CD4-positive, alpha-beta T cell (primary cell): ENCODE measurements at regions of chr20 and their contacts with region 1.

Region 1: GRCh38 chr20:44310664-44311639 is at the start of gene FITM2:
- DNase-seq: peak; percentile 96 to 99 (median 98)
- ATAC-seq: peak; percentile 94
- H3K4me3 ChIP-seq: peak within 1 kb of the TSS; percentile 99
- H3K4me3 Mint-ChIP-seq: peak within 1 kb of the TSS; percentile 95
- H3K27ac ChIP-seq: peak within 1 kb of the TSS; percentile 40 to 47
- H3K27ac Mint-ChIP-seq: peak within 1 kb of the TSS; percentile 76
- H3K4me1 ChIP-seq: peaks cover 28% of the 10 kb centered on the region
- H3K4me1 Mint-ChIP-seq: peaks cover 28% of the 10 kb centered on the region
- H3K27me3 ChIP-seq: no peaks in the 10 kb centered on the region
- H3K27me3 Mint-ChIP-seq: no peaks in the 10 kb centered on the region
- CTCF ChIP-seq: peak; percentile 87
- total RNA-seq, gene FITM2: 3.2 to 3.4 TPM

Region 2: DNA sequence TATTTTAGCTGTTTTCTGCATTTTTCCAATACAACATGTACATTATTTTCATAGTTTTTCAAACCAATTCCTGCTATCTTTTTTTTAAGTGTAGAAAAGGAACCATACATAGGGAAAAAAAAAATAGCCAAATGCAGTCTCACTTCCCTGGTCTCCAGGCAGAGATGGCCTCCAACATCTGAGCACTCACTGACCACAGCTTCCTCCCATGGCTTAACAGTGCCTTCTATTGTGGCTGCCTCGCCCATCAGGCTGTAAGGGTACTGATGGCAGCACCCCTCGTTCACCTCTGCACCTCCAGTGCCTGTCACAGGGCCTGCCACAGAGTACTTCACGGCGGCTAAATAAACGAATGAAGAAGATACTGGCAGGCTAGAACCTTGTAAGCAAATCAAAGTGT is 1712.4 kb before region 1 on chr20:
- CTCF ChIA-PET with region 1: no interaction called
- POLR2A ChIA-PET with region 1: no interaction called
- intact Hi-C with region 1: no loop called
- DNase-seq: no peak
- ATAC-seq: no peak
- H3K4me3 ChIP-seq: no peak overlapping the region
- H3K4me3 Mint-ChIP-seq: no peak overlapping the region
- H3K27ac ChIP-seq: no peak overlapping the region
- H3K27ac Mint-ChIP-seq: no peak overlapping the region
- H3K4me1 ChIP-seq: no peaks in the 10 kb centered on the region
- H3K4me1 Mint-ChIP-seq: no peaks in the 10 kb centered on the region
- H3K27me3 ChIP-seq: no peaks in the 10 kb centered on the region
- H3K27me3 Mint-ChIP-seq: no peaks in the 10 kb centered on the region
- CTCF ChIP-seq: no peak

Region 3: GRCh38 chr20:43318755-43319297 is 992.1 kb before region 1 on chr20:
- CTCF ChIA-PET with region 1: no interaction called
- POLR2A ChIA-PET with region 1: no interaction called
- intact Hi-C with region 1: no loop called
- DNase-seq: no peak
- ATAC-seq: no peak
- H3K4me3 ChIP-seq: no peak overlapping the region
- H3K4me3 Mint-ChIP-seq: no peak overlapping the region
- H3K27ac ChIP-seq: no peak overlapping the region
- H3K27ac Mint-ChIP-seq: no peak overlapping the region
- H3K4me1 ChIP-seq: no peaks in the 10 kb centered on the region
- H3K4me1 Mint-ChIP-seq: no peaks in the 10 kb centered on the region
- H3K27me3 ChIP-seq: peaks cover 0 to 3% of the 10 kb centered on the region in 2 experiments
- H3K27me3 Mint-ChIP-seq: peaks cover 8% of the 10 kb centered on the region
- CTCF ChIP-seq: no peak

Region 4: DNA sequence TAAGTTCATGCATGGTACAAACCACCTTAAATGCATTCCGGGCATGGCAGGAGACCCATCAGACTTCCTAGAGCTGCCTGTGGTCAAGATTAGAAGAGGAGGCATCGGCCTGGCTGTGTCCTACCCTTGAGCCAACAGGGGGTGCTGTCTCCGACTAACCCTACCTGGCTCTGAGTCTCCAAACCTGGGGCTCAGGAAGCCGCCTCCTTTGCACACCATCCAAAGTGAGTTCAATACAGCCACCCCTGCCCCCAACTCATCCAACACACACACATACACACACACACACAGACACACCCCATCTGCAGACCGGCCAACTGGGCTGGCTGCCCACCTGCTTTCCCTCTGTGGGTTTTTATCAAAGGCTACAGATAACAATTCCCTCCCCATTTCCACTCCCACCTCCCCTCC is 201.0 kb before region 1 on chr20:
- CTCF ChIA-PET with region 1: no interaction called
- POLR2A ChIA-PET with region 1: no interaction called
- intact Hi-C with region 1: loop called in 1 of 2 experiments (anchors 10 kb)
- DNase-seq: no peak
- ATAC-seq: no peak
- H3K4me3 ChIP-seq: no peak overlapping the region
- H3K4me3 Mint-ChIP-seq: no peak overlapping the region
- H3K27ac ChIP-seq: no peak overlapping the region
- H3K27ac Mint-ChIP-seq: no peak overlapping the region
- H3K4me1 ChIP-seq: no peaks in the 10 kb centered on the region
- H3K4me1 Mint-ChIP-seq: peaks cover 3% of the 10 kb centered on the region
- H3K27me3 ChIP-seq: peaks cover 18 to 19% of the 10 kb centered on the region in 2 experiments
- H3K27me3 Mint-ChIP-seq: peaks cover 71% of the 10 kb centered on the region
- CTCF ChIP-seq: no peak

Region 5: DNA sequence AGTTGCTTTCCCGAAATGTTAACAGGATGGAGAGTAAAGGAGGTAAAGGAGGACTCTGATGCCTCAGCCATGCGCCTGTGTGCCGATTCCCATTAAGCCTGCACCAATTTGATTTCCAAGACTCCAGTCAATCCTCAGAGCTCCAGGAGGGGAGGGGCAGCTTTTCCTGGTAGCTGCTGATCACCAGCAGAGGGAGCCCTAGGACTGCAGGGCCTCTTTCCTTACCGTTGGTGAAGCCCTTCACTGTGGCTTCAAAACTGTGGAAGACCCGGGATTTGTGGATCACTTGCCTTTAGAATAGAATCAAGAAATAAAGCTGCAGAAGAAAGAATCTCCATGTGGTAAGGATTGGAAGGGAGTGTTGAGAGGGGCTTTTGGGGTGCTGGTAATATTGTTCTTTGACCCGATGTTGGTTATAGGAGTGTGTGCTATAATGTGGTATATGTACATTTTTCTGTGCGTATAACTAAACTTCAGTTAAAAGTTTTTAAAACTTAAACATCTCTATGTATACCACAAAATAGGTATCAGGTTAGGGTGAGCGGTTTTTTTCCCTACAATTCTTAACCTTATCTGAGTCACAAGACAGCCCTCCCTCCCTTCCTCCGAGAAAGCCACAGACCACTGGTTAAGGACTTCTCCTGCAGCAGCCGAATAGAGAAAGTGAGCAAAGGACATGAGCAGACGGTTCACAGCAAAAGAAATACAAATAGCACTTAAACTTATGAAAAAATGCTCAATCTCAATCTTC is 93.4 kb before region 1 on chr20:
- CTCF ChIA-PET with region 1: interaction called, 241 read pairs
- POLR2A ChIA-PET with region 1: interaction called, 155 read pairs
- intact Hi-C with region 1: loop called (anchors 1 kb)
- DNase-seq: peak; percentile 51 to 87 (median 63)
- ATAC-seq: peak; percentile 49
- H3K4me3 ChIP-seq: peak overlapping the region; percentile 41
- H3K4me3 Mint-ChIP-seq: peak overlapping the region; percentile 80
- H3K27ac ChIP-seq: peak overlapping the region; percentile 62 to 71
- H3K27ac Mint-ChIP-seq: peak overlapping the region; percentile 91
- H3K4me1 ChIP-seq: peaks cover 46% of the 10 kb centered on the region
- H3K4me1 Mint-ChIP-seq: peaks cover 60% of the 10 kb centered on the region
- H3K27me3 ChIP-seq: no peaks in the 10 kb centered on the region
- H3K27me3 Mint-ChIP-seq: no peaks in the 10 kb centered on the region
- CTCF ChIP-seq: peak; percentile 98

Region 6: GRCh38 chr20:44342248-44342647 is 31.3 kb after region 1 on chr20:
- CTCF ChIA-PET with region 1: no interaction called
- POLR2A ChIA-PET with region 1: no interaction called
- intact Hi-C with region 1: no loop called
- DNase-seq: no peak
- ATAC-seq: no peak
- H3K4me3 ChIP-seq: no peak overlapping the region
- H3K4me3 Mint-ChIP-seq: no peak overlapping the region
- H3K27ac ChIP-seq: no peak overlapping the region
- H3K27ac Mint-ChIP-seq: no peak overlapping the region
- H3K4me1 ChIP-seq: no peaks in the 10 kb centered on the region
- H3K4me1 Mint-ChIP-seq: no peaks in the 10 kb centered on the region
- H3K27me3 ChIP-seq: no peaks in the 10 kb centered on the region
- H3K27me3 Mint-ChIP-seq: peaks cover 4% of the 10 kb centered on the region
- CTCF ChIP-seq: no peak

Region 7: GRCh38 chr20:44388466-44389023 is 77.6 kb after region 1 on chr20:
- CTCF ChIA-PET with region 1: interaction called, 3 read pairs
- POLR2A ChIA-PET with region 1: no interaction called
- intact Hi-C with region 1: loop called (anchors 5 kb)
- DNase-seq: peak; percentile 39 to 85 (median 56)
- ATAC-seq: peak; percentile 92
- H3K4me3 ChIP-seq: no peak overlapping the region
- H3K4me3 Mint-ChIP-seq: no peak overlapping the region
- H3K27ac ChIP-seq: no peak overlapping the region
- H3K27ac Mint-ChIP-seq: no peak overlapping the region
- H3K4me1 ChIP-seq: peaks cover 8% of the 10 kb centered on the region
- H3K4me1 Mint-ChIP-seq: peaks cover 15% of the 10 kb centered on the region
- H3K27me3 ChIP-seq: peaks cover 4% of the 10 kb centered on the region in 2 experiments
- H3K27me3 Mint-ChIP-seq: peaks cover 8% of the 10 kb centered on the region
- CTCF ChIP-seq: peak; percentile 66

Region 8: DNA sequence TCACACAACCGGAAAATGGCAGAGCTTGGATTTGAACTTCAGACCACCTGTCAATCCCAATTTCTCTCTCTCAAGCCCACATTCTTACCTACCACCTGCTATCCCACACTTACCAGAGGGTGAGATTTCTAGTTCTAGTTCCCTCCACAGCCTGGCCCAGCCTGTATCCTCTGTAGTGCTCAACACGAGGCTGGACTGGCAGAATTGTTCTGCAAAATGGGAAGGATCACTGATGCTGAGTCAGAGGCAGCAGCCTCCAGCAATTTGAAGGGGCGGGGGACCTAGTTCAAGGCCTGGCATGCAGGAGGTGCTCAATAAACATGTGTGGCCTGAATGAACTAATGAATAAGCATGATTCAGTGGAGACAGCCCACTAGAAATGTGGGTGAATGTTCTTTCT is 111.1 kb after region 1 on chr20:
- CTCF ChIA-PET with region 1: no interaction called
- POLR2A ChIA-PET with region 1: no interaction called
- intact Hi-C with region 1: no loop called
- DNase-seq: no peak
- ATAC-seq: no peak
- H3K4me3 ChIP-seq: no peak overlapping the region
- H3K4me3 Mint-ChIP-seq: no peak overlapping the region
- H3K27ac ChIP-seq: no peak overlapping the region
- H3K27ac Mint-ChIP-seq: no peak overlapping the region
- H3K4me1 ChIP-seq: no peaks in the 10 kb centered on the region
- H3K4me1 Mint-ChIP-seq: no peaks in the 10 kb centered on the region
- H3K27me3 ChIP-seq: peaks cover 0 to 5% of the 10 kb centered on the region in 2 experiments
- H3K27me3 Mint-ChIP-seq: peaks cover 17% of the 10 kb centered on the region
- CTCF ChIP-seq: no peak

Region 9: GRCh38 chr20:44475694-44476560 is 165.0 kb after region 1 on chr20 and contains the start of gene TTPAL:
- CTCF ChIA-PET with region 1: no interaction called
- POLR2A ChIA-PET with region 1: no interaction called
- intact Hi-C with region 1: loop called in 1 of 2 experiments (anchors 5 kb)
- DNase-seq: peak; percentile 75 to 95 (median 86)
- ATAC-seq: peak; percentile 95
- H3K4me3 ChIP-seq: peak within 1 kb of the TSS; percentile 90
- H3K4me3 Mint-ChIP-seq: peak within 1 kb of the TSS; percentile 95
- H3K27ac ChIP-seq: peak within 1 kb of the TSS; percentile 89 to 98
- H3K27ac Mint-ChIP-seq: peak within 1 kb of the TSS; percentile 96
- H3K4me1 ChIP-seq: peaks cover 18% of the 10 kb centered on the region
- H3K4me1 Mint-ChIP-seq: peaks cover 26% of the 10 kb centered on the region
- H3K27me3 ChIP-seq: no peaks in the 10 kb centered on the region
- H3K27me3 Mint-ChIP-seq: no peaks in the 10 kb centered on the region
- CTCF ChIP-seq: no peak
- total RNA-seq, gene TTPAL: 9.0 to 9.9 TPM

Region 10: DNA sequence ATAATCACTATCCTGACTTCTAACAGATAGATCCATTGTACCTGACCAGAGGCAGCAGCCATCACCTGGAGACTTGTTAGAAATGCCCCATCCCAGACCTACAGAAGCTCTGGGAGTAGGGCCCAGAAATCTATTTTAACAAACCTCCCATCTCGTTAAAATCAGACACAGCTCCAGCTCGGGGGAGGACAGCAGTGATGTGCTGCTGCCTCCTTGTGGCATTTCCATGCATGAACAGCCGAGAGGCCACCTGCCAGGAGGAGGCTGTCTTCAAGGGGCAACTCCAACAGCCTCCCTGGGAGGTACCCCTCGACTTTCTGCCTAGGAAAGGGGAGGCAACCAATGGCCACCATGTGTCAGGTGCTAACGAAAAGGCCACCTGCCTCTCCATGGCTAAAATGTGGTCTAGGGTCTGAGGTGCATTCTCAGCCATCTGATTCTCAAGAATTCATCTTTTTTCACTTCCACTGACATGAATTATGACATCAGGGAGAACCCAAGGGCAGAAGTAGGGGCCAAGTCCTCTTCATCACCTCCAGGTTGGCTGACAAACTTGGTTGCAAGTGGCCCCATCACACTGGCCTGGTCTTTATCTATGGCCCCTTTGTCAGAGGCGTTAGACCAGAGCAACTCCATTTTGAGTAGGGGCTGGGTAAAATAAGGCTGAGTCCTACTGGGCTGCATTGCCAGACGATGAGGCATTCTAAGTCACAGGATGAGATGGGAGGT is 422.6 kb after region 1 on chr20:
- CTCF ChIA-PET with region 1: no interaction called
- POLR2A ChIA-PET with region 1: no interaction called
- intact Hi-C with region 1: loop called in 1 of 2 experiments (anchors 10 kb)
- DNase-seq: peak; percentile 38 to 81 (median 50)
- ATAC-seq: peak; percentile 74
- H3K4me3 ChIP-seq: no peak overlapping the region
- H3K4me3 Mint-ChIP-seq: no peak overlapping the region
- H3K27ac ChIP-seq: no peak overlapping the region
- H3K27ac Mint-ChIP-seq: no peak overlapping the region
- H3K4me1 ChIP-seq: peaks cover 14% of the 10 kb centered on the region
- H3K4me1 Mint-ChIP-seq: peaks cover 11% of the 10 kb centered on the region
- H3K27me3 ChIP-seq: no peaks in the 10 kb centered on the region
- H3K27me3 Mint-ChIP-seq: no peaks in the 10 kb centered on the region
- CTCF ChIP-seq: peak; percentile 65